ENCODE measurements at regions of chr12 and their contacts with region 1.

Region 1: GRCh38 chr12:27243804-27244683 is at the start of gene STK38L:
- DNase-seq: peak; percentile 99
- ATAC-seq: peak; percentile 98
- H3K4me3 Mint-ChIP-seq: peak within 1 kb of the TSS; percentile 94
- H3K27ac Mint-ChIP-seq: peak within 1 kb of the TSS; percentile 94
- H3K4me1 Mint-ChIP-seq: peaks cover 40% of the 10 kb centered on the region
- H3K27me3 Mint-ChIP-seq: no peaks in the 10 kb centered on the region
- CTCF ChIP-seq: no peak
- total RNA-seq, gene STK38L: 23.5 to 27.6 TPM

Region 2: DNA sequence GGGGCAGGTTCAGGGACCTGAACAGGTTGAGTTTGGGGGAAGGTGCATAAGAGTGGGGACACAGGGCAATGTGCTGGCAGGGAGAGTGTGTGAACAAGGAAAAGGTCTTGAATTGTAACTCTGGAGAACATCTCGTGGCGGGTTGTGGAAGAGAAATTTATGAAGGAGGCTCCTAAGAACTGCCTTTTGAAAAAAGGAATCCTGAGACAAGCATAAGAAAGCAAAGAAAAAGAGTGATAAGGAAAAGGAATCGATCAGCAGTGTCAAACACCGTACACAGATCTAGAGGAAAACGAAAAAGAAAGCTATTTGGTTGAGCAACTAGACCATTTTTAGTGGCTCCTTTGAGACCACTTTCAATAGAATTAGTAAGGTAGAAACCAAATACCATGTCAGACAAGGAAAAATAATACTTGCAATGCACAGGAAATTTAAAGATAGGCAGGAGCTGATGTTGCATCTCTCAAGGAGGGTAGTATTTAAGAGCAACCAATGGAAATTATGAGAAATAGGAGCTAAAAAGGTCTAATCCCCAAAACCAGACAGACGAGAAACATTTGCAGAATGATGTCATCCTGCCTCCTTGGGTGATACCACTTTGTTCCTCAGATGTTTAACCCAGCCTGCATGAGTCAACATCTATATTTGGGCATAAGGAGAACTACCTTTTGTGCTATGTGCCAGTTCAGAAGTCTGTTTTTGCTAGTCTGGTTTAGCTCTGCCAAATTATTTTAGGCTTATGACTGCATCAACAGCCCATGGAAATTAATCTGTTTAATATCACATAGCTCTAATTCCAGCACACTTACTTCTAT is 64.4 kb before region 1 on chr12:
- CTCF ChIA-PET with region 1: interaction called, 3 read pairs
- POLR2A ChIA-PET with region 1: interaction called, 3 read pairs
- intact Hi-C with region 1: loop called (anchors 2 kb)
- DNase-seq: peak; percentile 63
- ATAC-seq: peak; percentile 95
- H3K4me3 Mint-ChIP-seq: peak overlapping the region; percentile 39
- H3K27ac Mint-ChIP-seq: peak overlapping the region; percentile 88
- H3K4me1 Mint-ChIP-seq: peaks cover 36% of the 10 kb centered on the region
- H3K27me3 Mint-ChIP-seq: no peaks in the 10 kb centered on the region
- CTCF ChIP-seq: no peak